ENCODE measurements at regions of chr13 and their contacts with region 1.

Region 1: GRCh38 chr13:24922745-24923591 is 159.0 kb downstream of the RNF17 start:
- DNase-seq: peak; percentile 99
- ATAC-seq: peak; percentile 100

Region 2: GRCh38 chr13:24938966-24939365 is 16.0 kb after region 1 on chr13:
- intact Hi-C with region 1: loop called (anchors 1 kb)
- DNase-seq: no peak
- ATAC-seq: no peak